ENCODE measurements at regions of chr21 and their contacts with region 1.

Region 1: GRCh38 chr21:29372063-29372802 is 73.5 kb downstream of the BACH1 start:
- DNase-seq: peak; percentile 68
- CTCF ChIP-seq: peak; percentile 57

Region 2: GRCh38 chr21:28867401-28867800 is 504.8 kb before region 1 on chr21:
- CTCF ChIA-PET with region 1: no interaction called
- POLR2A ChIA-PET with region 1: no interaction called
- DNase-seq: no peak
- CTCF ChIP-seq: no peak

Region 3: DNA sequence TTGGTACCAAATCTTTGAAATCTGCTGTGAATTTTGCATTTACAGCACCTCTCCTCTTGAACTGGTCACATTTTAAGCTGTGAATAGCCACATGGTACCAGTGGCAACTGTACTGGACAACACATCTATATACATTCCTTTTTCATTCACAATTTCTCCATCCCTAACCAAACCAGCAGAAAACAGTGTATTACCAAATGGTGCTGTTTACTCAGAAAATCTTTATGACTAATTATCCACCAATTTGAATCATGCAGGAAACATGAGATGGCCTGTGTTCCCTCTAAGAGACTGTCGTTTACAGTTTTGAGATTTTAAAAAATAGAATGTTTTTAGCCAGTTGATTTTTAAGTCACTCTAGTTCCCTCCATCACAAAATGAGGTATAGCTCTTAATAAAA is 281.2 kb before region 1 on chr21:
- CTCF ChIA-PET with region 1: interaction called, 28 read pairs
- POLR2A ChIA-PET with region 1: no interaction called
- DNase-seq: no peak
- CTCF ChIP-seq: no peak

Region 4: GRCh38 chr21:29298348-29299045 is 73.7 kb before region 1 on chr21 and contains the start of gene BACH1:
- CTCF ChIA-PET with region 1: interaction called, 16 read pairs
- POLR2A ChIA-PET with region 1: interaction called, 3 read pairs
- DNase-seq: peak; percentile 93
- CTCF ChIP-seq: peak; percentile 48

Region 5: DNA sequence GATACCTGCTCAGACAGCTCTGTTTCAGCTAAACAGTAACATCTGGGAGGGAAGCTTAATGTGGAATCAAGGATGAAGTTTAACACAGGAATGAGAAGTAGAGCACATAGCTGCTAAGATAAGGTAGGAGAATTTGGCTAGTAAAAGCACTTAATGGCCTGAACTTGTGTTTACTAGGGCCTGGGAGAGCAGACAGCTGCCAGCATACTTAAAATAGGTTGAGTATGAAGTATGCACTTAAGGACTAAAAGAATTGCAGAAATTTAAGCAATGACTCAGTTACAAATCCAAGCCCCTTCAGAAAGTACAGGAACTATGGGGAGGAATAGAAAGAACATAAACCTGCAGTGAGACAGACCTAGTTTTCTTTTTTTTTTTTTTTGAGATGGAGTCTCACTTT is 20.5 kb before region 1 on chr21:
- CTCF ChIA-PET with region 1: interaction called, 13 read pairs
- POLR2A ChIA-PET with region 1: no interaction called
- DNase-seq: no peak
- CTCF ChIP-seq: no peak

Region 6: DNA sequence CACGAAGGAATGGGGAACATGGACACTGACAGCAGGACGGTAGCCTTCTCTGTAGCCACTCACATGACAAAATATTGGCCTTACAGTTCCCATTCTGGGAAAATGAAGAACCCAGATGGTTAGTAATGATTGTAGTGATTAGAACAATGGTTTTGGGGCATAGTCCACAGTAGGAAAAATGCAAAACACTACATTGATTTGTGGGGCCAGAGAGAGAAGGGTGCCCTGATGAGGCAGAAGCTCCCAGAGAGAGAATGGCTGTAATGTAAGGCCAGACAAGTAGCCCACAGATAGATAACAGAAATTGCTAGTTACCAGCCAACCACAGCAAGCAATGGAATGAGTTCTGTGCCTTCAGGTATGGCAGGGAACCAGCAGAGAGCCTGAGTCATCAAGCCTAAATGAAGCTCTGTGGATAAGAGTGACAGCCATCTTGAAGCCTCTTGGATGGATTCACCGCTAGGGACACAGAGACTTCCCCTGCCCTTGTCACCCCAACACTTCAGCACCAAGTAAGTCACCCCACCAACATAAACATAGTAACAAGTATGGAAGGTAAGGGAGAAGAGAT is 132.6 kb after region 1 on chr21:
- CTCF ChIA-PET with region 1: no interaction called
- POLR2A ChIA-PET with region 1: no interaction called
- DNase-seq: no peak
- CTCF ChIP-seq: no peak

Measured in GM10248 (cell line).